GM12878 (cell line): ENCODE measurements at regions of chr3 and their contacts with region 1.

Region 1: DNA sequence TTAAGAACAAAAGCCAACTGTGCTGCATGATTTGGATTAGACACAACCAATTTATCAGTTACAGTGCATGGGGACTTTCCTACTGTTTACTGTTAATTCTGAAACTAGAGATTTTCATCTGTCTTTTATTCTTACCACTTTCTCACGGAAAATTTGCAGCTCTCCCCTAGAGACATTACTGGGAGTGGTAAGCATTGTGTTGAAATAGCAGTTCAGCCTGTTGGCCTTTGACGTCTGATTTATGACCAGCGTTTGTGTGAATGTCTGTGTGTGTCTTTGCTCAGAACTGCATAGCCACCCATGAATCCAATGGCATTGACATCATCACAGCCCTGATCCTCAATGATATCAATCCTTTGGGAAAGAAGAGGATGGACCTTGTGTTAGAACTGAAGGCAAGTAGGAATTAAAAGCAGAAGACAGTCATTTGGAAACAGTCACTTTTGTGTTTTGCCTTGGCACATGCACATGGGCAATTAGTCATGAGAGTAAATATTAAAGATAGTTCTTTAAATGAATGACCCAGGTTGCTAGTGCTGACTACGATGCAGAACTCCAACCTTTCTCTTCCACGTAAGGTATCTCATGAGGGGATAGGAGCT is 202.2 kb upstream of the BHLHE40 start:
- DNase-seq: peak; percentile 98
- ATAC-seq: peak; percentile 82
- H3K4me3 ChIP-seq: no peak overlapping the region
- H3K27ac ChIP-seq: peak overlapping the region; percentile 99
- H3K4me1 ChIP-seq: peaks cover 32% of the 10 kb centered on the region
- H3K27me3 ChIP-seq: no peaks in the 10 kb centered on the region
- CTCF ChIP-seq: no peak
- EP300 ChIP-seq: peak; percentile 90 to 97; a peak in 3 of 4 replicates
- POLR2A ChIP-seq: peak; percentile 53; the same call in 1 of the 2 replicates
- RAD21 ChIP-seq: peak; percentile 41

Region 2: GRCh38 chr3:4730719-4731118 is 46.4 kb before region 1 on chr3:
- CTCF ChIA-PET with region 1: interaction called, 7 read pairs
- POLR2A ChIA-PET with region 1: interaction called, 4 read pairs
- RAD21 ChIA-PET with region 1: interaction called, 21 read pairs
- SMC1A ChIA-PET with region 1: interaction called, 11 read pairs
- in situ Hi-C with region 1: no loop called
- intact Hi-C with region 1: no loop called
- DNase-seq: no peak
- ATAC-seq: no peak
- H3K4me3 ChIP-seq: no peak overlapping the region
- H3K27ac ChIP-seq: no peak overlapping the region
- H3K4me1 ChIP-seq: no peaks in the 10 kb centered on the region
- H3K27me3 ChIP-seq: no peaks in the 10 kb centered on the region
- CTCF ChIP-seq: no peak
- EP300 ChIP-seq: no peak
- POLR2A ChIP-seq: no peak
- RAD21 ChIP-seq: no peak

Region 3: DNA sequence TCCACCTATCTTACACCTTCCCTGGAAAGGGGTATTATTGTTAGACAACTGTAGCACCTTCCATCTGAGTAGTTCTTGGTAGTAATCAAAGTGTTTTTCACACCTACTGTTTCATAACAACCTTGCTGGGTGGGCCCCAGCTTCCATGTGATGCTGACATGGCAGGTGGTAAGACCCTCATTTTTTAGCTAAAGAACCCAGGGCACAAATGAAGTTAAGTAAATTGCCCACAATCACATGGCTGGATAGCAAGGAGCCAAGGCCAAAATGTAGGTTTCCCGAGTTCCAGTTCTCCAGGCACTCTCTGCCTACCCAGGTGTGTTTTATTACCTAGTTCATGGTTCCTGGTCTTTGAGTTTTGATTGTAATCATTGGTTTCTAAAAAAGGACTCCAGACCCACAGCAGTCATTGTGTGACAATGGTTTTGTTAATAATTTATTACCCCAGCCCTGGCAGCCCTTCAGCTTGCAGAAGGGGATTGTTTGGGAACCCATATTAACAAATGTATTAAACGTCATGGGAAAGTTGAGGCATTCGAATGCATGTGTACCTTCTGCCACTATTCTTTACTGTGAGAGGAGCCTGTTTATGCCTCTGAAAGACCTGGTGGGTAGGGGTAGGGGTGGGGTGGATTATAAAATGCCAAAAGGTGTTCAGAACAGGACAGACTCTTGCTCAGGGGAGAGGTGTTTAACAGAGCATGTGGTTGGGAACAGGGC is 20.1 kb before region 1 on chr3:
- CTCF ChIA-PET with region 1: interaction called, 95 read pairs
- POLR2A ChIA-PET with region 1: interaction called, 414 read pairs
- RAD21 ChIA-PET with region 1: interaction called, 377 read pairs
- SMC1A ChIA-PET with region 1: interaction called, 618 read pairs
- in situ Hi-C with region 1: no loop called
- intact Hi-C with region 1: loop called (anchors 1 kb)
- DNase-seq: no peak
- ATAC-seq: peak; percentile 12
- H3K4me3 ChIP-seq: no peak overlapping the region
- H3K27ac ChIP-seq: peak overlapping the region; percentile 33
- H3K4me1 ChIP-seq: peaks cover 55% of the 10 kb centered on the region
- H3K27me3 ChIP-seq: no peaks in the 10 kb centered on the region
- CTCF ChIP-seq: no peak
- EP300 ChIP-seq: peak in 1 of 2 experiments; percentile 37; a peak in 2 of 4 replicates
- POLR2A ChIP-seq: no peak
- RAD21 ChIP-seq: no peak

Region 4: GRCh38 chr3:4826237-4827100 is 49.4 kb after region 1 on chr3:
- CTCF ChIA-PET with region 1: interaction called, 6 read pairs
- POLR2A ChIA-PET with region 1: interaction called, 10 read pairs
- RAD21 ChIA-PET with region 1: interaction called, 9 read pairs
- SMC1A ChIA-PET with region 1: interaction called, 14 read pairs
- in situ Hi-C with region 1: no loop called
- intact Hi-C with region 1: loop called (anchors 2 kb)
- DNase-seq: no peak
- ATAC-seq: peak; percentile 9
- H3K4me3 ChIP-seq: no peak overlapping the region
- H3K27ac ChIP-seq: no peak overlapping the region
- H3K4me1 ChIP-seq: peaks cover 21% of the 10 kb centered on the region
- H3K27me3 ChIP-seq: no peaks in the 10 kb centered on the region
- CTCF ChIP-seq: no peak
- EP300 ChIP-seq: no peak
- POLR2A ChIP-seq: peak; percentile 31; the same call in 1 of the 2 replicates
- RAD21 ChIP-seq: no peak

Region 5: GRCh38 chr3:4834403-4834866 is 57.4 kb after region 1 on chr3:
- CTCF ChIA-PET with region 1: interaction called, 6 read pairs
- POLR2A ChIA-PET with region 1: interaction called, 3 read pairs
- RAD21 ChIA-PET with region 1: interaction called, 9 read pairs
- SMC1A ChIA-PET with region 1: interaction called, 14 read pairs
- in situ Hi-C with region 1: no loop called
- intact Hi-C with region 1: loop called (anchors 2 kb)
- DNase-seq: no peak
- ATAC-seq: peak; percentile 63
- H3K4me3 ChIP-seq: no peak overlapping the region
- H3K27ac ChIP-seq: peak overlapping the region; percentile 43; the same call in 1 of the 2 replicates
- H3K4me1 ChIP-seq: peaks cover 43% of the 10 kb centered on the region
- H3K27me3 ChIP-seq: no peaks in the 10 kb centered on the region
- CTCF ChIP-seq: no peak
- EP300 ChIP-seq: peak; percentile 89 to 95; a peak in 3 of 4 replicates
- POLR2A ChIP-seq: no peak
- RAD21 ChIP-seq: 0 out of 2 replicates have a peak, but pooled peaks have one; percentile 4

Region 6: DNA sequence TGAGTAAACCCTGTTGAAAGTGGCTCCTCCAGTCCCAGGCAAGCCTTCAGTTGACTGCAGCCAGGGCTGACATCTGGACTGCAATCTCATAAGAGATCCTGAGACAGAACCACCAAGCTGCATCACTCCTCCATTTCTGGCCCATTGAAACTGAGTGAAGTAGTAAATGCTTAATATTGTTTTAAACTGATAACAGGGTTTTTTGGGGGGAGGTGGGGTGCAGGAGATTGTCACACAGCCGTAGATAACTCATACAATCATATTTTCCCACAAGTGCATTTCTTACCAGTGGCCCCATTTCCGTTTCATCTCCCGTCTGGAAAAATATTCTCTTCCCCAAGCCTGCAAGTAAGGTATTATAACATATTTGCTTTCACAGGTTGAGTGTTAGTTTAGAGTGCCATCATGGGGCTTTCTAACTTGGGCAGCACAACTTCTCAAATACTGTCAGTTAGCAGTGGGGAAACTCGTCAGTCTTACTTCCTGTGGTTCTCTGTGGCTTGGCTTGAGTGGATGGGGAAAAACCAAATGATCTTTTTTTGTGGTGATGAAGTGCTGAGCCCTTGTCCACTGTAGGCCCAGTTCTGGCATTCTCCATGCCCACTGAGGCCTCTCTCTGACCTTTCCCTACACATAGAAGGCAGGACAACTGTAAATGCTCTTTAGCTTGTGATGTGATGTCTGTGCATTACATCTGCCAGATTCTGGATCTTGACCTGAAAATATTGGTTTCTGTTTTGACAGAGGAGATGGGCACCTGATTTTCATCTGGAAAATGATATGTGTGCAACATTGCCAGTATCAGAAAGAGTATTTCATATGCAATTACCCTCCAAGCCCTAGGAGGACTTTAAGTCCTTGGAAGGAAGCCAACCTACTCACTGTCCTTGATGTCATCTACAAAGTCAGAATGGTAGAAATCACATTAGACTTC is 112.1 kb after region 1 on chr3:
- CTCF ChIA-PET with region 1: interaction called, 3 read pairs
- POLR2A ChIA-PET with region 1: no interaction called
- RAD21 ChIA-PET with region 1: no interaction called
- SMC1A ChIA-PET with region 1: interaction called, 5 read pairs
- in situ Hi-C with region 1: no loop called
- intact Hi-C with region 1: loop called (anchors 2 kb)
- DNase-seq: peak; percentile 71
- ATAC-seq: peak; percentile 96
- H3K4me3 ChIP-seq: no peak overlapping the region; the same call in 1 of the 2 replicates
- H3K27ac ChIP-seq: peak overlapping the region; percentile 69
- H3K4me1 ChIP-seq: peaks cover 12% of the 10 kb centered on the region
- H3K27me3 ChIP-seq: no peaks in the 10 kb centered on the region
- CTCF ChIP-seq: peak in 1 of 3 experiments; percentile 45; a peak in 3 of 6 replicates
- EP300 ChIP-seq: peak; percentile 51 to 71; a peak in 3 of 4 replicates
- POLR2A ChIP-seq: no peak
- RAD21 ChIP-seq: peak; percentile 74